ENCODE measurements at regions of chr9 and their contacts with region 1.

Region 1: GRCh38 chr9:122810306-122810946 is 10.5 kb downstream of the OR1K1 start:
- DNase-seq: peak; percentile 79 to 91 (median 85)
- H3K4me3 ChIP-seq: no peak overlapping the region
- H3K27ac ChIP-seq: no peak overlapping the region
- H3K4me1 ChIP-seq: peaks cover 2 to 14% (median 7%) of the 10 kb centered on the region in 4 experiments
- H3K27me3 ChIP-seq: no peaks in the 10 kb centered on the region

Region 2: GRCh38 chr9:122464633-122465567 is 345.5 kb before region 1 on chr9:
- CTCF ChIA-PET with region 1: interaction called, 57 read pairs
- POLR2A ChIA-PET with region 1: no interaction called
- DNase-seq: peak; percentile 87 to 92 (median 92)
- H3K4me3 ChIP-seq: peak overlapping the region in 6 of 7 experiments; percentile 62 to 87 (median 71)
- H3K27ac ChIP-seq: peak overlapping the region in 1 of 2 experiments; percentile 75
- H3K4me1 ChIP-seq: peaks cover 0 to 10% (median 6%) of the 10 kb centered on the region in 4 experiments
- H3K27me3 ChIP-seq: no peaks in the 10 kb centered on the region

Measured in common myeloid progenitor, CD34-positive (primary cell).